ENCODE measurements at regions of chr19 and their contacts with region 1.

Region 1: GRCh38 chr19:13262450-13262849 is 112.2 kb downstream of the IER2 start:
- DNase-seq: no peak
- H3K4me3 ChIP-seq: no peak overlapping the region
- H3K27ac ChIP-seq: no peak overlapping the region
- H3K4me1 ChIP-seq: peaks cover 0 to 8% (median 0%) of the 10 kb centered on the region in 6 donors
- H3K27me3 ChIP-seq: peaks cover 0 to 17% (median 0%) of the 10 kb centered on the region in 7 donors
- CTCF ChIP-seq: peak; percentile 16 to 71 (median 60)
- POLR2A ChIP-seq: no peak

Region 2: GRCh38 chr19:13150187-13150930 is 112.1 kb before region 1 on chr19 and contains the starts of genes IER2 and STX10:
- intact Hi-C with region 1: loop called (anchors 5 kb)
- DNase-seq: peak; percentile 99
- H3K4me3 ChIP-seq: peak within 1 kb of the TSS; percentile 86 to 99 (median 97)
- H3K27ac ChIP-seq: peak within 1 kb of the TSS; percentile 94 to 100 (median 98)
- H3K4me1 ChIP-seq: peaks cover 15 to 63% (median 35%) of the 10 kb centered on the region in 6 donors
- H3K27me3 ChIP-seq: no peaks in the 10 kb centered on the region
- CTCF ChIP-seq: peak; percentile 68 to 88 (median 79)
- POLR2A ChIP-seq: peak in 1 of 3 donors; percentile 33
- total RNA-seq, gene IER2: 59.7 to 131 (median 104) TPM
- total RNA-seq, gene STX10: 43.8 to 89.5 (median 55.8) TPM

Region 3: DNA sequence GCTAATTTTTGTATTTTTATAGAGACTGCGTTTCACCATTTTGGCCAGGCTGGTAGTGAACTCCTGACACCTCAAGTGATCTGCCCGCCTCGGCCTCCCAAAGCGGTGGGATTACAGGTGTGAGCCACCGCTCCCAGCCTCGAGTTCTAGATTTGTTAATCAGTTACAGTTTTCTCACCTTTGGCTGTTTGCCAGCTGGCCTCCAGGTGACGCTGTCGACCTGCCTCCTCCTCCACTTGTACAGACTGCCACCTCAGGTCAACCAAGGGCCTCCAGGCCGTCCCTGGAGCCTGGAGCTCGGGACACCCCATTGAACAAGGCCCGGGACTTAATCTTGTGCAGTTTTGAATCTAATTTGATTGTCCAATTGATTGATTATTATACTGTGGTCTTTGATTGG is 66.8 kb before region 1 on chr19:
- intact Hi-C with region 1: loop called (anchors 2 kb)
- DNase-seq: peak; percentile 85
- H3K4me3 ChIP-seq: no peak overlapping the region
- H3K27ac ChIP-seq: no peak overlapping the region
- H3K4me1 ChIP-seq: peaks cover 4 to 31% (median 24%) of the 10 kb centered on the region in 6 donors
- H3K27me3 ChIP-seq: no peaks in the 10 kb centered on the region
- CTCF ChIP-seq: peak in 10 of 11 experiments; percentile 12 to 57 (median 41)
- POLR2A ChIP-seq: no peak

Region 4: DNA sequence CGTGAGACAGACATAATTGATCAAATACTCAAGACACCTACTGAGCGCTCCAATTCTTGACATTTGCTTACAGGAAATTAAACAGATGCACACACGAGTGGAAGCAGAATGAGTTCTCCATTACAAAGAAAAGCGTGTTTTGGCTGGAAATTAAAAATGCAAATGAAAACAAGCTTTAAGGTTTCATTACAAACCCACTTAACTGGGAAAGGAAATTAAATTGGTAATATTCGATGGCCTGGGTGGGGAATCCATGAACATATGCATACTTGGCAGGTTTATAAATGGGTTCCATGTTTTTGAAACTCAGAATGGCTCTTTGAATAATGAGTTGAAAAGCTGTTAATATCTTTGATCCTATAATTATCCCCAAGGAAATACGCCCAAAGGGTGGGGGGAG is 65.8 kb after region 1 on chr19:
- intact Hi-C with region 1: no loop called
- DNase-seq: no peak
- H3K4me3 ChIP-seq: no peak overlapping the region
- H3K27ac ChIP-seq: no peak overlapping the region
- H3K4me1 ChIP-seq: no peaks in the 10 kb centered on the region
- H3K27me3 ChIP-seq: peaks cover 0 to 40% (median 0%) of the 10 kb centered on the region in 7 donors
- CTCF ChIP-seq: no peak
- POLR2A ChIP-seq: no peak